ENCODE measurements at regions of chr6 and their contacts with region 1.

Region 1: DNA sequence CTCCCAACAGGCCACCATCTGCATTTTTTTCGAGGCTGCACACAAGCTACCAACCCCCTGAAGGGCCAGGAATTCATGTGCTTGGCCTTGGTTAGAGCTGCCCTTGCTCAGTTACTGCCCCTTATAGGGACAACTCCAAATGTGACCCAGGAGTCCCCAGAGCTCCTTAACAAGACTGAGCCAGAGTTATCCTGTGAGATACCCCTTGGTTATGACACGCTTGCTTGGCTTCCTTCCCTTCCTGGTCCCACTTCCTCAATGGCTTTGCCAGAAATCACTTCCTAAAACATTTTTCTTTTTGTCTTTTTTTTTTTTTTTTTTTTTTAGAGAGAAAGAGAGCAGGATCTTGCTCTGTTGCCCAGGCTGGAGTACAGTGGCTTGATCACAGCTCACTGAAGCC is 8.9 kb downstream of the TREM1 start:
- DNase-seq: no peak
- ATAC-seq: no peak
- H3K4me3 ChIP-seq: no peak overlapping the region
- H3K4me3 Mint-ChIP-seq: no peak overlapping the region
- H3K27ac ChIP-seq: no peak overlapping the region
- H3K27ac Mint-ChIP-seq: no peak overlapping the region
- H3K4me1 ChIP-seq: peaks cover 2 to 6% of the 10 kb centered on the region in 2 experiments
- H3K4me1 Mint-ChIP-seq: peaks cover 10 to 13% (median 10%) of the 10 kb centered on the region in 3 donors
- H3K27me3 ChIP-seq: no peaks in the 10 kb centered on the region
- H3K27me3 Mint-ChIP-seq: no peaks in the 10 kb centered on the region

Region 2: DNA sequence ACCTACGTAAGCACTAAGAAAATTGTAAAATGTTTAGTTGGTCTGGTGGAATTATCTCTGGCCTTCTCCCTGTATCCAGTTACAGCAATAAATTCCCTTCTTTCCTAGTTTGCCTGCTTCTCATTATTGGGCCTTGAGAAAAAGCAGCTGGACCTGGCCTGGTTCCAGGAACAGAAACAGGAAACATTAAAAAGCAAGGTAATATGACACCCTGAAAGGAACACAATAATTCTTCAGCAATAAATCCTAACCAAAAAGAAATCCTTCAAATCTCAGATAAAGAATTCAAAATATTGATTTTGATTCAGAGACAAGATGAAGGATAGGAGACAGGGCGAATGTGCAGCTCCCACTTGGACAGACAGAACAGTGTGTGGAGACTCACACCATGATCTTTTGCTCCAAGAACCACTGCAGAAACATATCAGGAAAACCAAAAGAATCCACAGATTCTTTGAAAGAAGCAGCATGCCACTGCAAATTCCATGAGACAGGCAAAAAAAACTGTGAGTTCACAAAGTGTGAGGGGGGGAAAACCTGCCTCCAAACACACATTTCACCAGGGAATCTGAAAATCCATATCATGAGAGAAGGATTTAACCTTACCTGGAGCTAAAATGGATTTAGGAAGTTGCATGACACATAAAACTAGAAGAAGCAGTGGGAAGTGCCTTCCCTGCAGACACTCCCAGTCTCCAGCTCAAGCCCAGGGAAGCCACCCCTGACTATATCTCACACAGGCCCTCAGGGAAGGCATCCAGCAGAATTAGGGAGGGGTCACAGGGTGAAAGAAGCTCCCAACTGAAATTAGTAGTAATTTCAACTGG is 20.0 kb before region 1 on chr6:
- CTCF ChIA-PET with region 1: no interaction called
- POLR2A ChIA-PET with region 1: no interaction called
- DNase-seq: no peak
- ATAC-seq: no peak
- H3K4me3 ChIP-seq: no peak overlapping the region
- H3K4me3 Mint-ChIP-seq: no peak overlapping the region
- H3K27ac ChIP-seq: no peak overlapping the region
- H3K27ac Mint-ChIP-seq: no peak overlapping the region
- H3K4me1 ChIP-seq: no peaks in the 10 kb centered on the region
- H3K4me1 Mint-ChIP-seq: peaks cover 0 to 12% (median 8%) of the 10 kb centered on the region in 3 donors
- H3K27me3 ChIP-seq: peaks cover 0 to 5% of the 10 kb centered on the region in 2 experiments
- H3K27me3 Mint-ChIP-seq: peaks cover 0 to 2% of the 10 kb centered on the region in 2 donors

Region 3: GRCh38 chr6:41288030-41288753 is 10.6 kb after region 1 on chr6:
- CTCF ChIA-PET with region 1: no interaction called
- POLR2A ChIA-PET with region 1: no interaction called
- DNase-seq: no peak
- ATAC-seq: no peak
- H3K4me3 ChIP-seq: no peak overlapping the region
- H3K4me3 Mint-ChIP-seq: no peak overlapping the region
- H3K27ac ChIP-seq: no peak overlapping the region
- H3K27ac Mint-ChIP-seq: no peak overlapping the region
- H3K4me1 ChIP-seq: no peaks in the 10 kb centered on the region
- H3K4me1 Mint-ChIP-seq: peaks cover 0 to 2% (median 0%) of the 10 kb centered on the region in 3 donors
- H3K27me3 ChIP-seq: peaks cover 0 to 10% of the 10 kb centered on the region in 2 experiments
- H3K27me3 Mint-ChIP-seq: peaks cover 5 to 8% of the 10 kb centered on the region in 2 donors

Region 4: DNA sequence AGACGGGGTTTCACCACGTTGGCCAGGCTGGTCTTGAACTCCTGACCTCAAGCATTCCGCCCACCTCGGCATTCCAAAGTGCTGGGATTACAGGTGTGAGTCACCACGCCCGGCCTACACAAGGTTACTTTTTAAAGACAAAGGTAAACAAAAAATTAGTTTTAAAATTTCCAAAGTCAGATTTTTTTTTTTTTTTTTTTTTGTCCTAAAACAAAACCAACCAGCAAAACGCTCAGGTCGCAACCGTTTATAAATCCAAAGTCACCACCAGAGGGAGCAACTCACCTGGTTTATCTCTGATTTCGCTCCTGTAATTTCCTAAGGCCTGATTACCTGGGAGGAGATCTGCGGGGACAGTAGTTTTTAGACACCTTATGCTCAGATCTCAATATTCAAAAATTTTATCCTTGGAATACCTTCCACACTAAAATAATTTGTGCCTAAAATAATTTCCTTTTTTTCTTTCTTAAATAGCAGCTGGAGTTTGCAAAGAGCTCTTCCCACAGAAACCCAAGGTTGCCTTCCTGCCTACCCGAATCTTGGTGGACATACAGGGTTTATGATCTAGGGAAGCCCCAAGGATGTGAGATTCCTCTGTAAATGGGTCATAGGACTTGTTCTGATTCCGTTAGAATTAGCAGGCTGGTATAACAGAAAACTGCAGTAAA is 28.7 kb after region 1 on chr6:
- CTCF ChIA-PET with region 1: interaction called in 1 of 2 experiments, 8 read pairs
- POLR2A ChIA-PET with region 1: interaction called in 1 of 2 experiments, 11 read pairs
- DNase-seq: peak in 22 of 35 experiments; percentile 7 to 80 (median 25)
- ATAC-seq: no peak
- H3K4me3 ChIP-seq: no peak overlapping the region
- H3K4me3 Mint-ChIP-seq: no peak overlapping the region
- H3K27ac ChIP-seq: no peak overlapping the region
- H3K27ac Mint-ChIP-seq: no peak overlapping the region
- H3K4me1 ChIP-seq: peaks cover 0 to 9% of the 10 kb centered on the region in 2 experiments
- H3K4me1 Mint-ChIP-seq: peaks cover 12 to 22% (median 12%) of the 10 kb centered on the region in 3 donors
- H3K27me3 ChIP-seq: peaks cover 0 to 4% of the 10 kb centered on the region in 2 experiments
- H3K27me3 Mint-ChIP-seq: peaks cover 1% of the 10 kb centered on the region in 2 donors

Region 5: DNA sequence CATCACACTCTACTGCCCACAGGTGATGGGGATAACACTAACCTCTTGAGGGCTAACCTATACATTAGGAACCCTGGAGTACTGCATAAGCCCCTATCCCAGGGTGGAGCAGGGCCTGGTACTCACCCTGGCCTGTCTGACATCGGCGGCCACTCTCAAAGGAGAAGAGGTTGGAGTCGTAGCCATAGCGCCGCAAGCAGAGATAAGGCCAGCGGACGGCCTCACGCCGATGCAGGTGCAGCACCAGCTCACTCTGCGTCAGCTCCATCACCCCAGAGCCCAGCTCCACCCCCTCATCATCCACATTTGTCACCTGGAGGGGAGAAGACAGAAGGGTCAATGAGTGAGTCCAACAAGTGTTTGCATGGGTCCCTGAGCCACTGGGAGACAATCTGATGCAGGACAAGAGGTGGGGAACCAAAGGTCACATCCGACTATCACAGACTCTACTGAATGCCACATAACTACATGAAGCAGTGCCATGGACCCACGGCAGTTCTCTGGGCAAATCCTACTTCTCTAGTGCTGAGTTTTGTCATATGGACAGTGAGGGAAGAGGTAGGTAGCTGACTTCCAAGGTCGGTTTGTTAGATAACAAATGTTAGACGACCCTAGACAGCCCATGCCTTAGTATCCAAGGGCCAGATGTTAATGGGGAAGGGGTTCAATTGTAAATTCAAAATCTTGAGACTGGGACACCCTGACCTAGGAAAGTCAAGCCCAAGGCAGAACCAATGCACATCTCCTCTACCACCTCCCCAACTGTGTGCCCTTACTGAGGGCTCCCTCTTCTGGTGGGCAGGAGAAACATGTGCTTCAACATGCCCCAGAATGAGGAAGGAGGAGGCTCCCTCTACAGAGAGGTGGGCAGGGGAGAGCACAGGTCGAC is 497.9 kb after region 1 on chr6:
- CTCF ChIA-PET with region 1: no interaction called
- POLR2A ChIA-PET with region 1: no interaction called
- DNase-seq: peak in 20 of 35 experiments; percentile 13 to 64 (median 20)
- ATAC-seq: no peak
- H3K4me3 ChIP-seq: no peak overlapping the region
- H3K4me3 Mint-ChIP-seq: no peak overlapping the region
- H3K27ac ChIP-seq: no peak overlapping the region
- H3K27ac Mint-ChIP-seq: no peak overlapping the region
- H3K4me1 ChIP-seq: peaks cover 5 to 13% of the 10 kb centered on the region in 2 experiments
- H3K4me1 Mint-ChIP-seq: peaks cover 8 to 13% (median 10%) of the 10 kb centered on the region in 3 donors
- H3K27me3 ChIP-seq: peaks cover 0 to 4% of the 10 kb centered on the region in 2 experiments
- H3K27me3 Mint-ChIP-seq: peaks cover 0 to 1% of the 10 kb centered on the region in 2 donors